Activated CD4-positive, alpha-beta T cell treated with anti-CD3 and anti-CD28 coated beads, Interleukin-2, amount 10 ng/mL, durations not matched to agents 24 days and 14 days (primary cell): ENCODE measurements at regions of chr5 and their contacts with region 1.

Region 1: GRCh38 chr5:76521240-76521758 is 101.9 kb downstream of the F2RL2 start:
- DNase-seq: peak; percentile 65
- H3K4me3 Mint-ChIP-seq: peak overlapping the region; percentile 77
- H3K27ac Mint-ChIP-seq: peak overlapping the region; percentile 96
- H3K4me1 Mint-ChIP-seq: peaks cover 37% of the 10 kb centered on the region
- H3K27me3 Mint-ChIP-seq: no peaks in the 10 kb centered on the region

Region 2: GRCh38 chr5:76473661-76474060 is 47.6 kb before region 1 on chr5:
- intact Hi-C with region 1: loop called (anchors 1 kb)
- DNase-seq: peak; percentile 88
- H3K4me3 Mint-ChIP-seq: peak overlapping the region; percentile 51
- H3K27ac Mint-ChIP-seq: peak overlapping the region; percentile 86
- H3K4me1 Mint-ChIP-seq: peaks cover 50% of the 10 kb centered on the region
- H3K27me3 Mint-ChIP-seq: no peaks in the 10 kb centered on the region